Activated naive CD4-positive, alpha-beta T cell treated with anti-CD3 and anti-CD28 coated beads for 36 hours (primary cell): ENCODE measurements at regions of chr16 and their contacts with region 1.

Region 1: DNA sequence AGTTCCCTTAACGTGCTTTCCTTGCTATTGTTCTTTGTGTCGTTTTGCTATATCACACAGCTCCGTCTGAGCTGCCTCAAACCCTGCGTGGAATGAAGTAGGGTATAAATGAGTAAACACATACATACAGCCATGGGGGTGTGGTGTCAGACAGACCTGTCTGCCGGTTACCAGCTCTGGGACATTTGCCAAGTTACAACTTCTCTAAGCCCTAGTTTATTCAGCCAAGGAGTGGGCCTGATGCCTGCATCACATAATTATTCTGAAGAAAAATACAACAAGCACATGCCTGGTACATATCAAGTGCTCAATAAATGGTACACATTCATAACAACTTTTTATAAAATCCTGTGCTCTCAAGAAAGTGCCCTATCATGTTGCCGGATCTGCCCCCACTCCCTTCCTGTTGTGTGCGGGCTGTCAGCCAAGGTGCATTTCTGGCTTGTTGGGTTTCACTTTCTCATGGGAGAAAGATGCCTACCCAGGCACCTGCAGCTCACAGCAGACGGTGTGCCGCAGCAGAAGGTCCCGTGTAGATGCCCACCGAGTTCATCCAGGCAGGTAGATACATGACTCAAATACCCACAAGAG is 30.5 kb downstream of the SMPD3 start:
- DNase-seq: peak; percentile 89
- H3K4me3 Mint-ChIP-seq: peak overlapping the region; percentile 66
- H3K27ac Mint-ChIP-seq: peak overlapping the region; percentile 92
- H3K4me1 Mint-ChIP-seq: peaks cover 52% of the 10 kb centered on the region
- H3K27me3 Mint-ChIP-seq: no peaks in the 10 kb centered on the region

Region 2: DNA sequence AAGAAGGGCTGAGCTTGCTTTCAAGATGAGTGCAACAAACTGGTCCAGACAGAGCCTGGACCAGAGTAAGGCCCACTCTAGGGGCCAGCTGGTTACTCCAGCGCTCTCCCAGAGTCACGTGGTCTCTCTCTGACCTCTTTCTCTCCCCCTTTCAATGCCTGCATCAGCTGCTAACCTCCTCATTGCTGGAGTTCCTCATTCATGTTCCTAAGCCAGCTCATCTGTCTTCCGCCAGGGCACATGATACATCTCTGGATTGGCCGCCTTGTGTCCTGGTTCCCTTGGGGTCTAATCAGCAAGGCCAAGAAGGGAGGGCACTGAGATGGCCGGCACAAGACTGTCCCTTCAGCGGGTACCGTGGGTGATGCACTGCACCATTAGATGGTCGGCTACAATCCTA is 94.4 kb after region 1 on chr16:
- CTCF ChIA-PET with region 1: interaction called, 28 read pairs
- intact Hi-C with region 1: no loop called
- DNase-seq: no peak
- H3K4me3 Mint-ChIP-seq: no peak overlapping the region
- H3K27ac Mint-ChIP-seq: no peak overlapping the region
- H3K4me1 Mint-ChIP-seq: peaks cover 2% of the 10 kb centered on the region
- H3K27me3 Mint-ChIP-seq: no peaks in the 10 kb centered on the region